GM13977 (cell line): ENCODE measurements at regions of chr12 and their contacts with region 1.

Region 1: DNA sequence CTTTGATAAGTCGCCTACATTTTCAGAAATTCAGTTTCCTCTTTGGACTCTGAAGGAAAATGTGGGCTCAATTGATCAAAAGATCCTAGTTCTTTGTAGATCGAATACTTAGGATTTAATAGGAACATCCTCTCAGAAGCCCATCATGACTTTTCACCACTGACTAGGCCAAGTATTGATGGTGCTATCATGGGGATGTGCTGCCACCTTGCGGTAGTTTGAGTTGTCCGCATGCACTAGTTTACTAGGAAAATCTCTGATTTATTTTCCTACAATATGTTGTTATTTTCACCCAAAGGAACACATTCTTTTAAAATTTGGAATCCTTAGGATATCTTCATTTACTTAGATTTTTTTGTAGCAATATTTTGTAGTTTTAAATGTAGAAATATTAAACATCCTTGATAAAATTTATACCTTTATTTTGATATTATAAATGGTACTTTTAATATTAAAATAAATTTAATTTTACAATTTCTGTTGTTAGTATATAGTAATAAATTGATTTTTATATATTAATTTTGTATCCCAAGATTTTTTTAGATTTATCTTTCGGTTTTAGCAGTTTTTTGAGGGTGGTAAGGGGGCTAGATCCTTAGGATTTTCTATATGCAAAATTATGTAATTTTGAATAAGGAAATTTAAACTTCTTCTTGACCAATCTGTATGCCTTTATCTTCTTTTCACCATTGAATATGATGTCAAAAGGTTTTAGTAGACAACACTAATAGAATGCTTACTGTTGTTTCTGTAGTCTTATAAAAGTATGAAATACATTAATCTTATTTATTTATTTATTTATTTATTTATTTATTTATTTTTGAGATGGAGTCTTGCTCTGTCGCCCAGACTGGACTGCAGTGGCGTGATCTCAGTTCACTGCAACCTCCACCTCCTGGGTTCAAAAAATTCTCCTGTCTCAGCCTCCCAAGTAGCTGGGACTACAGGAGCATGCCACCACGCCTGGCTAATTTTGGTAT is 52.9 kb upstream of the OR9K2 start:
- DNase-seq: peak; percentile 53
- CTCF ChIP-seq: peak; percentile 81

Region 2: GRCh38 chr12:54749191-54749818 is 324.0 kb before region 1 on chr12:
- in situ Hi-C with region 1: loop called (anchors 25 kb)
- DNase-seq: peak; percentile 52
- CTCF ChIP-seq: peak; percentile 83

Region 3: GRCh38 chr12:54853995-54854566 is 219.3 kb before region 1 on chr12 and contains the start of gene MUCL1:
- in situ Hi-C with region 1: loop called (anchors 10 kb)
- DNase-seq: peak; percentile 39
- CTCF ChIP-seq: peak; percentile 82

Region 4: GRCh38 chr12:54993161-54993835 is 80.0 kb before region 1 on chr12:
- in situ Hi-C with region 1: loop called (anchors 5 kb)
- DNase-seq: peak; percentile 57
- CTCF ChIP-seq: peak; percentile 71

Region 5: GRCh38 chr12:55142669-55143565 is 69.6 kb after region 1 on chr12:
- in situ Hi-C with region 1: no loop called
- DNase-seq: peak; percentile 21
- CTCF ChIP-seq: peak; percentile 77

Region 6: DNA sequence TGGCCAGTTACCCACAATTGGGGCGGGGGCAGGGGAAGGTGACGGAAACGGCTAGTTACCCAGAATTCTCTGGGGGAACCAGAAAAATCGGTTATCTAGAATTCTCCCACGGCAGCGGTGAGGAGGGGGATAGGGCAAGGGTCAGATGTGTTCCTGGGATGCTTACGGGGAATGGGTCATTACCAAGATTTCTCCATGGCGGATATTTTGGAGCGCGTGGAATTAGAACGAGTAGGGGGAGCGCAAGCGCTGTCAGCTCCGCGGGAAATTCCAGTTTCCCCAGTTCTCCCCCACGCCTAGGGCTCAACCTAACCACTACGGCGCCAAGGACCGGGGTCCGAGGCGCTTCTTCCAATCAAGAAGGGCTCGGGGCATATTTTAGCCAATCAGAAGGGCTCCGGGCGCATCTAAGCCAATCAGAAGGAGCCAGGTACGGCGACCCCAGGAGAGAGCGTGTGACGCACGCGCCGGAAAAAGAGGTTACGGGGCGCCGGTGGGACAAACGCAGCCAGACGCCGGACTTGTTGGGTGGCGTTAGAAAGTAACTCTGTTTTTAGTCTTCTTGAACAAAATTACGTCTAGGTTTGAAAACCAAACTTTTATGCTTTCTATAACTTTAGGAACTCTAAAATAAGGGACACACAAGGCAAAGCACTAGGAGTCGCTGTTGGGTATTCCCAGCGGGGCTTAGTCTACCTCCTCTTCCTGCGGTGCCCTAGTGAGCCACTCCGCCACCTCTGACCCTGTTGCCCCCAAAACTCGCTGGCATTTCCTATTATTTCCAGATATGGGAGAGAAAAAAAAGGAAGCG is 1260.6 kb after region 1 on chr12 and contains the start of gene PAN2:
- in situ Hi-C with region 1: no loop called
- DNase-seq: peak; percentile 96
- CTCF ChIP-seq: peak; percentile 50